CD4-positive, alpha-beta T cell (primary cell): ENCODE measurements at regions of chr17 and their contacts with region 1.

Region 1: DNA sequence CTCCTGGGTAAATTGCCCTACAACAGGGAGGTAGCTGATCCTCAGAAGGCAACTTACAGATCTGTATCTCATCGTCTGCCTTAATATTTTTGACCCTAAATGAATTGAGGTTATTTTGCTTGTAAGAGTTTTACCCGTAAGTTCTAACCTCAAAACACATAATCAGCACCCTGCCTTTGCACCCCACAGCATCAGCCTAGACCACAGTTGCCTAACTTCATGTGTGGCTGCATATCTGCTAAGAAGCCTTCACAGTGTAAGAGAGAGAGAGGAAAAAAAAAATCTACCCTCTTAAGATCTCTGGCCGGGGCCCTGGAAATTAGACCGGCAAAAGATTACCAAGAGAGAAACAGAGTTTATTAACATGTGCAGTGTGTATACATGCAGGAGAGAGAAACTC is 76.9 kb downstream of the ARHGAP44 start:
- DNase-seq: no peak
- ATAC-seq: no peak
- H3K4me3 ChIP-seq: no peak overlapping the region
- H3K4me3 Mint-ChIP-seq: no peak overlapping the region
- H3K27ac ChIP-seq: no peak overlapping the region
- H3K27ac Mint-ChIP-seq: no peak overlapping the region
- H3K4me1 ChIP-seq: no peaks in the 10 kb centered on the region
- H3K4me1 Mint-ChIP-seq: no peaks in the 10 kb centered on the region
- H3K27me3 ChIP-seq: no peaks in the 10 kb centered on the region
- H3K27me3 Mint-ChIP-seq: no peaks in the 10 kb centered on the region
- CTCF ChIP-seq: no peak

Region 2: GRCh38 chr17:12667299-12667958 is 198.8 kb before region 1 on chr17:
- CTCF ChIA-PET with region 1: no interaction called
- POLR2A ChIA-PET with region 1: no interaction called
- intact Hi-C with region 1: no loop called
- DNase-seq: no peak
- ATAC-seq: no peak
- H3K4me3 ChIP-seq: no peak overlapping the region
- H3K4me3 Mint-ChIP-seq: no peak overlapping the region
- H3K27ac ChIP-seq: no peak overlapping the region
- H3K27ac Mint-ChIP-seq: no peak overlapping the region
- H3K4me1 ChIP-seq: no peaks in the 10 kb centered on the region
- H3K4me1 Mint-ChIP-seq: no peaks in the 10 kb centered on the region
- H3K27me3 ChIP-seq: peaks cover 33 to 35% of the 10 kb centered on the region in 2 experiments
- H3K27me3 Mint-ChIP-seq: peaks cover 54% of the 10 kb centered on the region
- CTCF ChIP-seq: no peak

Region 3: DNA sequence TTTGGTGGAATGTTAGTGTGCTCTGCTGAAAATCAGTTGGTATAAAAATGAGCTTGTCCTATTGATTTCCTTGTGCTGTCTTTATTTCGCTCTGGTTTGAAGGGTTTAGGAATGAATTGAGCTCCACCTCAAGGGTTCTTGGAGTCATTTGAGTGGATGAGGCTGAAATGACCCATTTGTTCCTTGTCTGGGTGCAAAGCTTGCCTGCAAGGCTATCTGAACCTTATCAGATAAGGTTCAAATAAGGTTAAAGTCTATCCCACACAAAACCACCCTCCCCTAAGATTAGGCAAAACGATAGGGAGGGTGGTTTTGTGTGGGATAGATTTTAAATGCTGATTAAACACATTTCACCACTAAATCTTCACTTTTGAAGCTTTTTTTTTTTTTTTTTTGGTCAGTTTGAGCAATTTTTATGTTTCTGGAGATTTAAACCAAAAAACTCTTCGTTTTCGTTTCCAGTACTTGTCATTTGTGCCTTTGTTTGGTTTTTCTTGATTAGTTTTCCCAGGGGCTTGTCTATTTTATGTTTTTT is 14.3 kb before region 1 on chr17:
- CTCF ChIA-PET with region 1: no interaction called
- POLR2A ChIA-PET with region 1: no interaction called
- intact Hi-C with region 1: loop called in 1 of 2 experiments (anchors 2 kb)
- DNase-seq: no peak
- ATAC-seq: no peak
- H3K4me3 ChIP-seq: no peak overlapping the region
- H3K4me3 Mint-ChIP-seq: no peak overlapping the region
- H3K27ac ChIP-seq: no peak overlapping the region
- H3K27ac Mint-ChIP-seq: no peak overlapping the region
- H3K4me1 ChIP-seq: no peaks in the 10 kb centered on the region
- H3K4me1 Mint-ChIP-seq: no peaks in the 10 kb centered on the region
- H3K27me3 ChIP-seq: no peaks in the 10 kb centered on the region
- H3K27me3 Mint-ChIP-seq: no peaks in the 10 kb centered on the region
- CTCF ChIP-seq: no peak